Gastrocnemius medialis (tissue), 4 donors: ENCODE measurements at regions of chr1 and their contacts with region 1.

Region 1: DNA sequence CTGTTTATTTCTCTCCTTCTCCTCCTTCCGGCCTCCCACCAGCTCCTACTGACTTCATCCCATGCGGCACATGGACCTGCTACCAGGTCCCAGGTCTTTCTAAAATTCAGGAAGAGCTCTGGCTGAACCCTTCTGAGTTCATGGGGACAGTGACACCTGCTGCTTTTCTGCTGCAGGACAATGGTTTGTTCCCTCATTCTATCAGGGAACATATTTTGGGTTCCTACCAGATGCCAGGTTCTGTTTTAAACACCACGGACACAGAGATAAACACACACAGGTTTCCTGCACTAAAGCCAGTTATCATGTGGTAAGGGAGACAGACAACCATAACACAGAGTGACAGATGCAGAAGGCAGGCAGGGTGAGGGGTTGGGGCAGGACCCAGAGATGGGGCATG is 114.0 kb upstream of the RAB4A start:
- DNase-seq: peak in 1 of 2 donors; percentile 19
- ATAC-seq: peak; percentile 81 to 82
- H3K4me3 ChIP-seq: no peak overlapping the region
- H3K27ac ChIP-seq: no peak overlapping the region
- H3K4me1 ChIP-seq: no peaks in the 10 kb centered on the region
- H3K27me3 ChIP-seq: no peaks in the 10 kb centered on the region
- CTCF ChIP-seq: peak; percentile 23 to 66 (median 47)
- POLR2A ChIP-seq: no peak

Region 2: DNA sequence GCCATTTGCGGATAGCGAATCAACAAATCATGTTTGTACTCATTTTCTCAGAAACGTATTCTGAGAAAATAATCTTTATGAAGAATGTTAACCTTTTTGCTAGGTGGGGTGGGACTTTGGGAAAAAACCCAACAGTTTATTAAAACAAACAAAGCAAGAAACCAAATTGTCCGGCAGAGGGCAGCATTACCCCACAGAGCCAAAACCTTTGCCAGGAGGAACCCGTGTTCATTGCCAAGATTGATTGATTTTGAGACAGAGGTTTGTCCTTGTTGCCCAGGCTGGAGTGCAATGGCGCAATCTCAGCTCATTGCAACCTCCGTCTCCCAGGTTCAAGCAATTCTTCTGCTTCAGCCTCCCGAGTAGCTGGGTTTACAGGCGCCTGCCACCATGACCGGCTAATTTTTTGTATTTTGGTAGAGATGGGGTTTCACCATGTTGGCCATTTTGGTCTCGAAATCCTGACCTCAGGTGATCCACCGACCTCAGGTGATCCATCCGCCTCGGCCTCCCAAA is 492.4 kb before region 1 on chr1:
- in situ Hi-C with region 1: no loop called
- intact Hi-C with region 1: loop called (anchors 5 kb)
- DNase-seq: peak; percentile 39 to 51
- ATAC-seq: peak in 1 of 2 donors; percentile 55
- H3K4me3 ChIP-seq: no peak overlapping the region
- H3K27ac ChIP-seq: no peak overlapping the region
- H3K4me1 ChIP-seq: no peaks in the 10 kb centered on the region
- H3K27me3 ChIP-seq: peaks cover 0 to 3% (median 0%) of the 10 kb centered on the region in 3 donors
- CTCF ChIP-seq: peak; percentile 72 to 90 (median 80)
- POLR2A ChIP-seq: no peak

Region 3: GRCh38 chr1:228691926-228692325 is 464.9 kb before region 1 on chr1:
- in situ Hi-C with region 1: no loop called
- intact Hi-C with region 1: loop called (anchors 2 kb)
- DNase-seq: no peak
- ATAC-seq: peak; percentile 58 to 65
- H3K4me3 ChIP-seq: no peak overlapping the region
- H3K27ac ChIP-seq: no peak overlapping the region
- H3K4me1 ChIP-seq: no peaks in the 10 kb centered on the region
- H3K27me3 ChIP-seq: peaks cover 0 to 2% (median 0%) of the 10 kb centered on the region in 3 donors
- CTCF ChIP-seq: peak; percentile 30 to 53 (median 43)
- POLR2A ChIP-seq: no peak

Region 4: GRCh38 chr1:229310833-229311232 is 154.0 kb after region 1 on chr1:
- in situ Hi-C with region 1: no loop called
- intact Hi-C with region 1: no loop called
- DNase-seq: no peak
- ATAC-seq: no peak
- H3K4me3 ChIP-seq: no peak overlapping the region
- H3K27ac ChIP-seq: no peak overlapping the region
- H3K4me1 ChIP-seq: peaks cover 9 to 14% of the 10 kb centered on the region in 2 donors
- H3K27me3 ChIP-seq: no peaks in the 10 kb centered on the region
- CTCF ChIP-seq: no peak
- POLR2A ChIP-seq: no peak

Region 5: GRCh38 chr1:229614701-229615100 is 457.8 kb after region 1 on chr1:
- in situ Hi-C with region 1: no loop called
- intact Hi-C with region 1: no loop called
- DNase-seq: no peak
- ATAC-seq: no peak
- H3K4me3 ChIP-seq: no peak overlapping the region
- H3K27ac ChIP-seq: no peak overlapping the region
- H3K4me1 ChIP-seq: peaks cover 0 to 3% of the 10 kb centered on the region in 2 donors
- H3K27me3 ChIP-seq: no peaks in the 10 kb centered on the region
- CTCF ChIP-seq: no peak
- POLR2A ChIP-seq: no peak